ENCODE measurements at regions of chr11 and their contacts with region 1.

Region 1: GRCh38 chr11:12673924-12674570 is at the start of gene TEAD1:
- DNase-seq: peak; percentile 71 to 97
- H3K4me3 ChIP-seq: peak within 1 kb of the TSS; percentile 94
- H3K27ac ChIP-seq: peak within 1 kb of the TSS; percentile 71
- H3K4me1 ChIP-seq: peaks cover 32% of the 10 kb centered on the region
- H3K27me3 ChIP-seq: no peaks in the 10 kb centered on the region
- CTCF ChIP-seq: no peak
- total RNA-seq, gene TEAD1: 76.9 and 106 TPM in 2 replicates

Region 2: GRCh38 chr11:12331239-12331874 is 342.7 kb before region 1 on chr11:
- CTCF ChIA-PET with region 1: interaction called, 3 read pairs
- POLR2A ChIA-PET with region 1: no interaction called
- intact Hi-C with region 1: loop called (anchors 5 kb)
- DNase-seq: peak; percentile 61 to 68
- H3K4me3 ChIP-seq: no peak overlapping the region
- H3K27ac ChIP-seq: no peak overlapping the region
- H3K4me1 ChIP-seq: no peaks in the 10 kb centered on the region
- H3K27me3 ChIP-seq: no peaks in the 10 kb centered on the region
- CTCF ChIP-seq: peak; percentile 82

Region 3: DNA sequence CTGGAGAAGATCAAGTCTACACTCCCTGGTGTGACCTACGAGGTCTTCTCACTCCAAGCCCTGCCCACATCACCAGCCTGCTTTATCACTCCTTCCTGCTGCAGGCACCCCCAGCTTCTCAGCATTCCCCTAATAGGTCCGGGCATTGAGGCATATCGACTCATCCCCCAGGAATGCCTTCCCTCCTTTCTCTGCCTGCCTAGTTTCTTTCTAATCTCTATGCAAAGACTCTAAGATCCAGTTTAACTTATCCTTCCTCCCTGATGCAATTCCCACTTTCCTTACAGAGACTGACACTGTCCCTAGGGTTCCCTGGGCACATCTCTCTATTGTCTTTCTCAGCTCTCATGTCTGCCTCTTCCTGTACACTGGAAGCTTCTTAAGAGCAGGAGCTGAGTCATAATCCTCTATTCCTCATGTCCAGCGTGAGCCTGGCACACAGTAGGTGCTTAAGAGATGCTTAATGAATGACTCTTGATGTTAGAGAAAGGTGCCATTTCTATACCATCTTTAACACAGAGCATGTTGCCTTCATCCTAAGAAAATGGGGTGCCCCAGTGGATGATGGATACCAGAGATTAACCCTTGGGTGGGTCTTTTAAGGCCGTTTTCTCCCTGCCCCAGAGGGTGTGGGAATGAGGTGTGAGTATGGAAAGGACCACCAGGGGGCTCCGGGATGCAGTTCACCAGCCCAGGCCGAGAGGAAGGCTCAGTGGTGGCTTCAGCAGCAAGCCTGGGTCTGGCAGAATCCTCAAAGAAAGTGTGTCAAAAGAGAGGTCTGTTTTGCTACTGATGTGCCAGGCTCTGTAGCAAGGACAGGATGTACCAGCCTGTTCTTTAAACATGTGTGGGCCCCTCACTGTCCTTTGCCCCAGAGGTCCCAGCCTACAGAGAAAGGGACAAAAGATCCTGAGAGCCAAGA is 262.0 kb before region 1 on chr11:
- CTCF ChIA-PET with region 1: no interaction called
- POLR2A ChIA-PET with region 1: no interaction called
- intact Hi-C with region 1: loop called (anchors 5 kb)
- DNase-seq: peak; percentile 62 to 78
- H3K4me3 ChIP-seq: no peak overlapping the region
- H3K27ac ChIP-seq: peak overlapping the region; percentile 93
- H3K4me1 ChIP-seq: peaks cover 35% of the 10 kb centered on the region
- H3K27me3 ChIP-seq: no peaks in the 10 kb centered on the region
- CTCF ChIP-seq: peak; percentile 72

Region 4: DNA sequence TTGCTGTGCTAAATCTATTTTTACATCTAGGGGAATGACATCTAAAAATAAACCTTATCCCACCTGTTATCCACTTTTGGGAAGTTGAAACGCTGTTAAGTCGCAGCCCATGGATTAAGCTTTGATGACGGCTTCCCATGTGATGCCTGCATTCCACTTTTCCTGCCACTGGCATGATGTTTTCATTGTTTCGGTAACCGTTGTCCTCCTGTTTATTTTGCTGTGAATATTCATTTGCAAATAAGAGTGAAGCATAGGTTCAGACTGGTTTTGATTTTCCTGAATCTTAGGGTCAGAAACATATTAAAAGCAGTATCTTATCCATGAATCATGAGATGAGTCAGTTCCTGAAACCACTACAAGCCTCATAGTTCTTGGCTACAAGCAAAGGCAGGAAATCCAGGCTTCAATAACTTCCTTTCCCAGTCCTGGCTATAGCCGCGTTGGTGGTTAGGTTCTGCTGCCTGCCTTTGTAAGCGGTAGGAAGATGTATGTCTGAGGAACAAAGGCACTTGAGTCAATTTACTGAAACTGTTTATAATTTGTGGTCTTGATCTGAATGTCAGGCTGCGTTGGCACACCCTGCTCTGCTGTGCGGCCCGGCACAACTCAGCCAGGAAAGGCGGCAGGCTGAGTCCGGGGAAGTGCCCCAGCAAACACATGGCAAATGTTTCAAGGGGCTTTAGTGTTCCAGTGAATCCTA is 19.6 kb after region 1 on chr11:
- CTCF ChIA-PET with region 1: no interaction called
- POLR2A ChIA-PET with region 1: no interaction called
- intact Hi-C with region 1: loop called (anchors 2 kb)
- DNase-seq: peak; percentile 44 to 92
- H3K4me3 ChIP-seq: peak overlapping the region; percentile 49
- H3K27ac ChIP-seq: peak overlapping the region; percentile 99
- H3K4me1 ChIP-seq: peaks cover 96% of the 10 kb centered on the region
- H3K27me3 ChIP-seq: no peaks in the 10 kb centered on the region
- CTCF ChIP-seq: no peak

Region 5: DNA sequence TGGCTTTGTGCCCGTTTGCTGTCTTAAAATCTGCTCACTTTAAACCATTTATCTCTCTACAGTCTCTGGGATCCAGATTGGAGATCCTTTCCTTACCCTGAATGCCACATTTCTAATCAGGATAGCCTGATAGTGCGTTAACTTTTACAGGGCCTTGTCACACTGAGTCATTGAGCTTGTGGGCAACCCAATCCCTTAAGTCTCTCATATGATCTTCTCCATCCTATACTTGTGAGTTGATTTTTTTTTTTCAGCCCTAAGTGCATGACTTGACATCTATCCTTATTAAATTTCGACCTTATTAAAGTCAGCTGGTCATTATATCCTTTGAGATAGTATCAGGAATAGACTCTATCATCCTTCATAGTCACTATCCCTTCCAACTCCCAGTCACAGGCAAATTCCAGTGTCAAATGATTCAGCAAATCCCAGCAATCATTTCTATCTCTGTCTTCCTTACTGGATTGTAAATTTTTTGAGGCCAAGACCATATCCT is 57.8 kb after region 1 on chr11:
- CTCF ChIA-PET with region 1: no interaction called
- POLR2A ChIA-PET with region 1: no interaction called
- intact Hi-C with region 1: no loop called
- DNase-seq: no peak
- H3K4me3 ChIP-seq: no peak overlapping the region
- H3K27ac ChIP-seq: no peak overlapping the region
- H3K4me1 ChIP-seq: peaks cover 25% of the 10 kb centered on the region
- H3K27me3 ChIP-seq: no peaks in the 10 kb centered on the region
- CTCF ChIP-seq: no peak

Region 6: DNA sequence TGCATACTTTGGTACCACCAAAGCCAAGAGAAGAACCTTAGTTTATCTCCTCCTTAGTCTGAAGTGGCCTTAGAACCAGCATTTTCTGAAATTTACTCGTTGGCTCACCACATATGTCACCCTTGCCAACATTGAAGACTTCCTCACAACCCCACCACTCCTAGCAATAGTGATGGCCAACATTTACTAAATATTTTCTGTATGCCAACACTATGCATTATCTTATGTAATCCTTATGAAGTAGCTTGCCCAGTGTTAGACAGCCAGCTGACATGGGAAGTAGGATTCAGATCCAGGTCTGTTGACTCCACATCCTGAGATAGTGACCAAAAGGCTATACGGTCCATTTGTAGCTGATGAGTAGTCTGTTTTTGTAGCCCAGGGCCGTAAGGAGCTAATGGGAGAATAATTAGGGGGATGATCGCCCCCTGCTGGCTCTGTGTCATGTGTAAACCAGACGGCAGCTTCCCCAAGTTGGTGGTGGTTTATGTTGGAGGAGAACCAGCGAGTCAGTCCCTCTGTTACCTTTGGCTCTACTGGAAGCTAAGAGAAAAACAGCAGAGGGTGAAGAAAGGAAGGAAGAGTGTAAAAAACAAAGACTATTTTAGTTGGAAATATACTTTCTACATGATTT is 214.6 kb after region 1 on chr11:
- CTCF ChIA-PET with region 1: no interaction called
- POLR2A ChIA-PET with region 1: no interaction called
- intact Hi-C with region 1: loop called (anchors 2 kb)
- DNase-seq: peak; percentile 41 to 60
- H3K4me3 ChIP-seq: no peak overlapping the region
- H3K27ac ChIP-seq: no peak overlapping the region
- H3K4me1 ChIP-seq: no peaks in the 10 kb centered on the region; the same call in 1 of the 2 replicates
- H3K27me3 ChIP-seq: no peaks in the 10 kb centered on the region
- CTCF ChIP-seq: peak; percentile 76

Measured in PC-9 (cell line).